Esophagus squamous epithelium (tissue), 5 donors: ENCODE measurements at regions of chr17 and their contacts with region 1.

Region 1: DNA sequence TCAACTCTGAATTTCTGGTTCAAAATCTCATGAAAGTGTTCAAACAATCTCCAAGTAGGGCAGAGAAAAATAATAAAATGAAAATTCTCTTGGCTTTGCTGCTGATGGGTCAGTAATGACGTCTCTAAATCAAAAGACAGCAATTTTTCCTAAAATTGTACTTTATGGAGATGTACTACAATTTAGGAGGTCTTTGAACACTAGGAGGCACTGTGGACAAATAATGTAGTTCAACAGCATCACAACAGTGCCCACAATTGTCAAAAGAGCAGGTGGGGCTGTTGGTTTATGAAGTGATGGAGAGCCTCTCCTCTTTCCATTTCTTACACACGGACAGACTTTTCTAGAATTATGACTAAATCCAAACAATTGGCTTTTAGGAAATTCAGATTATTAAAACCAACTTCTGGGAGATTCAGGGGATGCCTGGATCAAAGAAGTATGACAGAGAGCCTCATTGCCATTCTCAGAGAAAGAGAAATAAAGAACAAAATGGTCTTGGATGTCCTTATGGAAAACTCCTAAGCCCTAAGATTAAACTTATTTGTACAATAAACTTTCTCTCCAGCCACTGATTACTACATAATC is 23.8 kb downstream of the EZH1 start:
- DNase-seq: no peak
- H3K4me3 ChIP-seq: no peak overlapping the region
- H3K27ac ChIP-seq: no peak overlapping the region
- H3K4me1 ChIP-seq: no peaks in the 10 kb centered on the region
- H3K27me3 ChIP-seq: no peaks in the 10 kb centered on the region
- CTCF ChIP-seq: peak; percentile 59 to 76 (median 68)
- POLR2A ChIP-seq: no peak

Region 2: DNA sequence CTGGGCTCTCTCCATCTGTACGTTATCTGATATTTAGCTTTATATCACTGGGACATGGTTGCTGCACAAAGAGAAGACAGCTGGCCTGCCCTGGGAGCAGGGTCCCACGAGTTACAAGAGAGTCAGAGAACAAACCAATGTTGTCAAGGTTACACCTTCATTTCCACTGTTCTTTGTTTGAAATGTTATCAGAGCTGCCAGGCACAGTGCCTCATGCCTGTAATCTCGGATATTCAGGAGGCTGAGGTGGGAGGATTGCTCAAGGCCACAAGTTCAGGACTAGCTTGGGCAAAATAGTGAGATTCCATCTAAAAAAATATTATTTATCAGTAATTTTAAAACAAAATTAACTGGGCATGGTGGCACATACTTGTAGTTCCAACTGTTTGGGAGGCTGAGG is 227.8 kb before region 1 on chr17:
- intact Hi-C with region 1: no loop called
- DNase-seq: no peak
- H3K4me3 ChIP-seq: no peak overlapping the region
- H3K27ac ChIP-seq: no peak overlapping the region
- H3K4me1 ChIP-seq: no peaks in the 10 kb centered on the region
- H3K27me3 ChIP-seq: no peaks in the 10 kb centered on the region
- CTCF ChIP-seq: no peak
- POLR2A ChIP-seq: no peak

Region 3: DNA sequence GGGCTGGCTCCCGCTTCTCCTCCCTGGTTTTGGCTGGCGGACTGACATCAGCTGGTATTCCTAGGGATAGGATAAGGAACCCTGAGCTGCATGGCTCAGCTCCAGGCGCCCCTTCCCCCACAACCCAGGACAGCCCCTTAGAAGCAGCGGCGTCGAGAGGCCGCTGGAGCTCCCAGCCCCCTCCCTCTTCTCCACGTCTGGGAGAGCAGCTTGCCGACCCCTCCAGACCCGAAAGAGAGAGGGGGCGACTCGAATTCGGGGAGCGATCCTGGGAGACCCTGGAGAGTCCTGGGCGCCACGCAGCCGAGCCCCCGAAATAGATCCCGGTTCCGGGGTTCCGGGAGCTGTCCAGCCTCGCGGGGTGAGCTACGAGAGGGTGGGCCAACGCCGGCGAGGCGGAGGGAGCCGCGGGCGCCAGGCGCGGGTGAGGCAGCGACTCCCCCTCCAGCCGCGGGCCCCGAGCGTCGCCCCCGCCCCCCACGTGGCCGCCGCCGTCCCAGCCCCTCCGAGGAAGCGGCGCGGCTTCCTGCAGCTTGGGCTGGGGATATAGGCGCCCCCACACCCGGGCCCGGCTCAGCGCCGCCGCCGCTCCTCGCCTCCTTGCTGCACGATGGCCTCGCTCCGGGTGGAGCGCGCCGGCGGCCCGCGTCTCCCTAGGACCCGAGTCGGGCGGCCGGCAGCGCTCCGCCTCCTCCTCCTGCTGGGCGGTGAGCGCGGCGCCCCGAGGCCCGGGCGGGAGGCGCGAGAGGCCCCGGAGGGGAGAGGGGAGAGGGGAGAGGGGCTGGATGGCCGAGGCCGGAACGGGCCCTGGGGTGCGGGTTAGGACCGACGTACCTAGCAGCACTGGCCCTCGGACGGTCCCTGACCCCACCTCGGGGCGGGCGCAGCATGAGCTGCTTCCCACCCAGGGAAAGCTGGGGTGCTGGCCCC is 39.8 kb after region 1 on chr17 and contains the start of gene RAMP2:
- intact Hi-C with region 1: loop called (anchors 5 kb)
- DNase-seq: no peak
- H3K4me3 ChIP-seq: peak within 1 kb of the TSS; percentile 39 to 79 (median 56)
- H3K27ac ChIP-seq: peak within 1 kb of the TSS; percentile 50 to 82 (median 74)
- H3K4me1 ChIP-seq: peaks cover 13 to 38% (median 16%) of the 10 kb centered on the region in 3 donors
- H3K27me3 ChIP-seq: peaks cover 0 to 38% (median 0%) of the 10 kb centered on the region in 4 donors
- CTCF ChIP-seq: peak in 1 of 6 experiments; percentile 10
- POLR2A ChIP-seq: no peak
- total RNA-seq, gene RAMP2: 4.7 to 23.3 (median 11.8) TPM in 3 of 4 donors, not detected in the other

Region 4: GRCh38 chr17:42819944-42820535 is 99.0 kb after region 1 on chr17:
- intact Hi-C with region 1: loop called (anchors 10 kb)
- DNase-seq: no peak
- H3K4me3 ChIP-seq: no peak overlapping the region
- H3K27ac ChIP-seq: no peak overlapping the region
- H3K4me1 ChIP-seq: peaks cover 16 to 26% (median 19%) of the 10 kb centered on the region in 3 donors
- H3K27me3 ChIP-seq: no peaks in the 10 kb centered on the region
- CTCF ChIP-seq: peak; percentile 32 to 59 (median 45)
- POLR2A ChIP-seq: no peak